ENCODE measurements at regions of chr19 and their contacts with region 1.

Region 1: DNA sequence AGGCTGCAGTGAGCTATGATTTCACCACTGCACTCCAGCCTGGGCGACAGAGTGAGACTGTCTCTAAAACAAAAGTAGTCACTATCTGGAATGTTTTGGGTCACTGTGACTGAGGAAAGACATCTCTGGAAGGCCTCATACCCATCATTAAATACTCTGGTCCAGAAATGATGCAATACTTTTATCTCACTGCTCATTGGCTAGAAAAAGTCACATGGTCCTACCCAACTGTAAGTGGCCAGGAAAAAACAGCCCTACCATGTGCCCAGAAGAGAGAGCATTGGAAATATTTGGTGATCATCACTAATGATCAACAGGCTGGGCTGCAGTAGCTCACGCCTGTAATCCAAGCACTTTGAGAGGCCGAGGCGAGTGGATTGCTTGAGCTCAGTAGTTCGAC is 29.8 kb downstream of the PNPLA6 start:
- DNase-seq: no peak
- H3K4me3 ChIP-seq: no peak overlapping the region
- H3K27ac ChIP-seq: no peak overlapping the region
- H3K4me1 ChIP-seq: no peaks in the 10 kb centered on the region
- H3K27me3 ChIP-seq: no peaks in the 10 kb centered on the region
- CTCF ChIP-seq: no peak
- POLR2A ChIP-seq: no peak

Region 2: GRCh38 chr19:7337380-7338194 is 227.7 kb before region 1 on chr19:
- intact Hi-C with region 1: no loop called
- DNase-seq: peak in 1 of 7 donors; percentile 38
- H3K4me3 ChIP-seq: no peak overlapping the region
- H3K27ac ChIP-seq: peak overlapping the region in 2 of 5 donors; percentile 12 to 21
- H3K4me1 ChIP-seq: peaks cover 0 to 12% of the 10 kb centered on the region in 2 donors
- H3K27me3 ChIP-seq: no peaks in the 10 kb centered on the region
- CTCF ChIP-seq: no peak
- POLR2A ChIP-seq: no peak

Region 3: GRCh38 chr19:7450243-7451223 is 114.8 kb before region 1 on chr19:
- intact Hi-C with region 1: no loop called
- DNase-seq: no peak
- H3K4me3 ChIP-seq: no peak overlapping the region
- H3K27ac ChIP-seq: no peak overlapping the region
- H3K4me1 ChIP-seq: no peaks in the 10 kb centered on the region
- H3K27me3 ChIP-seq: no peaks in the 10 kb centered on the region
- CTCF ChIP-seq: no peak
- POLR2A ChIP-seq: no peak

Region 4: DNA sequence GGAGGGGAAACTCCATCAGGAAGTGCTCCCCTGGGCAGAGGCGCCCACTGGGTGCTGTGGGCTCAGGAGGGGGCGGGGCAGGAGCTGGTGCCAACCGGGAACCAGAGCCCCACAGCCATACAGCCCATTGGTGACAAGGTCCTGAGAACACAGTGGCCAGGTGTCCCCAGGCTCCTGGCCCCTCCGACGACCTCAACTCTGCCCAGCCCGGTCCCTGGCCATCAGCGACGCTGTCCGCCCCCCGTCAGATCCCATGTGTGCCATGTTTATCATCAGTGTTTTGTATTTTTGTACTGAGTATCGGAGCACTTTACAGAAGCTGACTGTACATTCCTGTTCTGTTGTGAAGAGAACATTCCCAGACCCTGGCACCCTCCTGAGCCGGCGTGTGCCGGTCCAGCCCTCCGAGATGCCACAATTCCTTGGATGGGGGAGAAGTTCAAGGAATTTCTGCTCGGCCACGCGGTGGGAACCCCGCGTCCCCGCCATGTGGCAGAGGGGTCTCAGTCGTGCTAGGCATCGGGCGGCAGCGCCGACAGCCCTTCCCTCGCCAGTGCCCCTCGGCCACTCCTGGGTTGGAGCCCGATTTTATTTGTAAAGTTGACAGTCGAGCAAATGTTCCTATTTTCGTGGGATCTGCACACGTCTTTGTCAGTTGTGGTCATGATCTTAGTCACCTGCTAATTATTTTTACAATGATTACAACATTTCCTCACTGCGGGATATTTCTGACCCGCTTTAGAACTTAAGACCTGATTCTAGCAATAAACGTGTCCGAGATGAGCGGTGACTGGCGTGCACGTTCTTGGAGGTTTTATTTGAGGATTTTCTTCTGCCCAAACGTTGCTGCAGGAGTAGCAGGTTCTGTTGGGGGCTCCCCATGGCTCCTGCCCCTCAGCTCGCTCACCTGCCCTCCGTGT is 93.4 kb before region 1 on chr19:
- intact Hi-C with region 1: no loop called
- DNase-seq: no peak
- H3K4me3 ChIP-seq: no peak overlapping the region
- H3K27ac ChIP-seq: no peak overlapping the region
- H3K4me1 ChIP-seq: no peaks in the 10 kb centered on the region
- H3K27me3 ChIP-seq: no peaks in the 10 kb centered on the region
- CTCF ChIP-seq: no peak
- POLR2A ChIP-seq: no peak

Region 5: DNA sequence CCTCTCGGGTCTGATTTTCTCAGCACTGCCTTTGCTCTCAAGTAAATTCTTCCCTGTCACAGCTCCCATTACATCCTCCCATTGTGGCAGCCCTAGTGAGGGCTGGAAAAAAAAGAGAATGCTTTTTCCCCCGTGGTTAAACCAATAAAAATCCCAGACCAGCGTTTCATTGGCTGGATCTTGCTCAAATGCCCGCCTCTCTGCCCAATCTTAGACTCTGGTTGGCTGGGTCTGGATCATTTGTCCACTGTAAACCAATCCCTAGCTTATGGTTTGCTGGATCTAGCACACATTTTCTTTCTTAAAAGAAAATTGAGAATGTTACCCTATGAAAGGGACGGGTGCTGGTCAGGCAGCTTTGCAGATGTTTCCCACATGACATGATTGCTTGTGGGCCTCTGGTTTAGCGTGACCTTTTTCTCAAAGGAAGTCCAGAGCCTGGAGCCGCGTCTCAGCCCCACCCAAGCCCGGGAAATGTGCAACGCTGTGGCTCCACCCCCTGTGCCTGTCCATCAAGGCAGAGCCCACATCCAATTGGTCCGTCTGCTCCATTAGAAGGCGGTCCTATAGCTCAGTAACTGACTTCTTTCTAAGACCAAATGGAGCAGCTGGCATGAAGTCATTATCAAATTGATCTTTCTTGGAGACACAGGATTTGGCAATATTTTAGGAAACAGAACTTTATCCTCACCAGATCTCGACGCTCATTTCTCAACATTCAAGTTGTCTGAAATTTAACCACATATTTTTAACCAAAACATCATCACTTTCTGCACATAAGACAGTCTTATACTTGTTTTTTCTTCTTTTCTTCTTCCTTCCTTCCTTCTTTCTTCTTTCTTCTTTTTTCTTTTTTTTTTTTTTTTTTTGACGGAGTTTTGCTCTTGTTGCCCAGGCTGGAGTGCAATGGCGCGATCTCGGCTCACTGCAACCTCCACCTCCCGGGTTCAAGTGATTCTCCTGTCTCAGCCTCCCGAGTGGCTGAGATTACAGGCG is 109.0 kb after region 1 on chr19:
- intact Hi-C with region 1: loop called (anchors 5 kb)
- DNase-seq: peak; percentile 43 to 72 (median 65)
- H3K4me3 ChIP-seq: no peak overlapping the region
- H3K27ac ChIP-seq: no peak overlapping the region
- H3K4me1 ChIP-seq: no peaks in the 10 kb centered on the region
- H3K27me3 ChIP-seq: peaks cover 4% of the 10 kb centered on the region
- CTCF ChIP-seq: no peak
- POLR2A ChIP-seq: no peak